ENCODE measurements at regions of chr11 and their contacts with region 1.

Region 1: GRCh38 chr11:78574386-78575381 is at the start of gene NARS2:
- DNase-seq: peak; percentile 91 to 99 (median 96)

Region 2: DNA sequence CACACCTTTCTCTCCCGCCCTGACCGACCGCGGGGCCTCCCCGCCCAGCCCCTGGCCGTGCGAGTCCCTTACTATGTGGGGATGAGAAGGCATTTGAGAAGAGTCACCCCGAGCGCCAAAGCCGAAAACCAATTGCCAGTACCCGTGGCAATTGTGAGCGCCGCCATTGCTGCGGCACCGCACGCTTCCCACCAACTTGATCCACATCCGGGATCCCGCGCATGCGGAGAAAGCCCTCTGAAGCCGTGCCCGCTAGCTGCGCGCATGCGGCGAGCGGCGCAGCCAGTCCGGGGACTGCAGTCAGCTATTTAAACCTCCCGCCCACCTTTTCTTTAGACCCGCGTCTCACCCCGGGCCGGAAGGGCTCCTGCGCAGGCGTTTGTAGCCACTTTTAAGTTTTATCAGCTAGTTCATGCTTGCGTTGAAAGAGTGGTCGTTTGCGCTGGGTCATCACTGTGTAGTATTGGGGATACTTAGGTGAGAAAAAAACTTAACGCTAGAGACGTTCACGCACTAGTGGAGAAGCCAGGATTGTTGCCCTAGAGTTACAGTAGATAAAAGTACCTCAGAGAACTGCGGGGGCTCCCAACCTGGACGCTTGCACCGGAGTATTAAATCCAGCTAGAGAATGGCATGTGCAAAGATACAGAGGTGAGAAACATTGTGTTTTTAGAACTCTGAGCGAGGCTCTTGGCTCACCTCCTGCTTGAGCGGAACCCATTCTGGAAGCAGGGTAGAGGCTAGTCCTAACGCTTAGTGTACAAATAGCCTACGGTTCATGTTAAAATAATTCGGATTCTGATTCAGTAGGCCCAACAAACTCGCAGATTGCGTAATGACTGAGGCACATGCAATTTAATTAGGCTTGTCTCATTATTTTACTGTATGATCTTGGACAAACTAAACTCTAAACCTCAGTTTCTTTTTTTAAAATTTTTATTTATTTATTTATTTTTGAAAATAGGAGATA is 435.0 kb before region 1 on chr11 and contains the start of gene ALG8:
- intact Hi-C with region 1: loop called (anchors 5 kb)
- DNase-seq: peak; percentile 88 to 99 (median 92)

Region 3: DNA sequence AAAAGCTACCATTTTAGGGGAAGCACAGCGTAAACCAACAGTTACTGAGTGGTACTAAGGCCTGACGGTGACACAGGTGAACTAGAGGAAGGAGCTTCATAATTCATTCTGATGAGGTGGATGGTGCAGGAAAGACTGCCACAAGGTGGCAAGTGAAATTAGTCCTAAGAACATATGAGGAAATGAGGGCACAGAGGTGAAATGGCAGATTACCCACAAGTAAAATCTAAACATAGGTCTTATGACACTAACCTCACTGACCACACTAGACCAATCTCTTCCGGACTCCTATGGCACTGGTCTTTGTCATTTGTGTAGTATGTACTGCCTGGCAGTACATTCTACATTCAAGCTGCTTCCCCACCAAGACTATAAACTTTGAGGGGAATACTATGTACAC is 177.3 kb before region 1 on chr11:
- intact Hi-C with region 1: no loop called
- DNase-seq: no peak

Region 4: GRCh38 chr11:78514922-78515502 is 59.7 kb before region 1 on chr11:
- intact Hi-C with region 1: no loop called
- DNase-seq: no peak

Region 5: GRCh38 chr11:78748918-78749690 is 174.4 kb after region 1 on chr11:
- intact Hi-C with region 1: no loop called
- DNase-seq: no peak